Activated CD4-positive, alpha-beta T cell treated with anti-CD3 and anti-CD28 coated beads for 36 hours (primary cell): ENCODE measurements at regions of chr9 and their contacts with region 1.

Region 1: GRCh38 chr9:132800038-132800648 is 77.9 kb downstream of the AK8 start:
- DNase-seq: peak; percentile 77
- ATAC-seq: peak; percentile 87
- H3K4me3 Mint-ChIP-seq: no peak overlapping the region
- H3K27ac Mint-ChIP-seq: no peak overlapping the region
- H3K4me1 Mint-ChIP-seq: no peaks in the 10 kb centered on the region
- H3K27me3 Mint-ChIP-seq: peaks cover 9% of the 10 kb centered on the region

Region 2: DNA sequence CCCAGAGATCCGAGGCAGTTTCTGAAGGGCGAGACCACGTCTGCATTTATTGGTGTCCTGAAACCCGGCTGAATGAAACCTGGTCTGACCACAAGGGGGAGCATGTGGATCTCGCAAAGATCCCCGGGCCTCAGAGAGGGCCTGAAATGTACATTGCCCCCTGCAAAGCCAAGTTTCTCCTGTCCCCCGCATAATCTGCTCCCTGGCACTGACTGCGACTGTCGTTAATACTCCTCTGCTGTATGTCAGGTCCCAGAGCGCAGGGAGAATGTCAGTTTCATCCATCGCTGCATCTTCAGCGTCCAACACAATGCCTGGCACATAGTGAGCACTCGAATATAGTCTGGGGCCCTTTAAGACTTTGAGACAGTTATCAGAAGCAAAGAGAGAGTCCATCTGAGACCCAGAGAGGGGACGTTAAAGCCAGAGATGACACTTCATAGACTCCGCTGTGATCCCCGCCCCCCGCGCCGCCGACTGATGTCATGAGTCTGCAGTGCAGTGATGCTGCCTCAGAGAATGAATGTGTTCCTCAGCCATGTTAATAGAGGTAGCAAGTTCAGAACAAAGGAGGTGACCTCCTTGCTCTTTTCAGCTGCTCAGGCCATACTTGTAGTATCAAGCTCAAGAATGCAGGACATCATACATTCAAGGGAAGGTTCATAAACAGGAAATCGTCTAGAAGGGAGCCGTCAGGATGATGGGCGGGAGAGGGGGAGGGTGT is 292.2 kb before region 1 on chr9:
- CTCF ChIA-PET with region 1: interaction called, 3 read pairs
- POLR2A ChIA-PET with region 1: no interaction called
- intact Hi-C with region 1: loop called (anchors 1 kb)
- DNase-seq: peak; percentile 82
- ATAC-seq: peak; percentile 68
- H3K4me3 Mint-ChIP-seq: no peak overlapping the region
- H3K27ac Mint-ChIP-seq: no peak overlapping the region
- H3K4me1 Mint-ChIP-seq: peaks cover 3% of the 10 kb centered on the region
- H3K27me3 Mint-ChIP-seq: peaks cover 3% of the 10 kb centered on the region

Region 3: GRCh38 chr9:132651254-132651653 is 148.9 kb before region 1 on chr9:
- CTCF ChIA-PET with region 1: no interaction called
- POLR2A ChIA-PET with region 1: no interaction called
- intact Hi-C with region 1: loop called in 1 of 2 experiments (anchors 5 kb)
- DNase-seq: peak; percentile 18
- ATAC-seq: no peak
- H3K4me3 Mint-ChIP-seq: no peak overlapping the region
- H3K27ac Mint-ChIP-seq: no peak overlapping the region
- H3K4me1 Mint-ChIP-seq: peaks cover 10% of the 10 kb centered on the region
- H3K27me3 Mint-ChIP-seq: no peaks in the 10 kb centered on the region

Region 4: DNA sequence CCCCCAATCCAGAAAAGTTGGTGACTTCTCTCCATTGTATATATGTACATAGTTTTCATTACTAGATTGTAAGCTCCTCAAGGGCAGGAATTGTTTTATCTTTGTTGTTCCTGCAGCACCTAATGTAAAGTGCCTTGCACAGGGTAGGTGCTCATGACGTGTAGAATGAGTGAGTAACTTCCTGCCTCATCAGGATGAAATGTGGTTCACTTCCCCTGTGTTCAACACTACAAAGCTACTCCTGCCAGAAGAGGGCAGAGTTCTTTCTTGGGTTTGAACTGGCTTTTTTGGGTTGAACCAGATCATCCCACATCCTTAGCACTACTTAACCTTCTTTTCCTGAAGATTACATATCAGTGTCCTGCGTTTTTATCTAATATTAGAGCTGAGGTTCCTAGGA is 106.0 kb before region 1 on chr9:
- CTCF ChIA-PET with region 1: no interaction called
- POLR2A ChIA-PET with region 1: no interaction called
- intact Hi-C with region 1: loop called in 1 of 2 experiments (anchors 1 kb)
- DNase-seq: peak; percentile 18
- ATAC-seq: peak; percentile 87
- H3K4me3 Mint-ChIP-seq: no peak overlapping the region
- H3K27ac Mint-ChIP-seq: no peak overlapping the region
- H3K4me1 Mint-ChIP-seq: no peaks in the 10 kb centered on the region
- H3K27me3 Mint-ChIP-seq: peaks cover 3% of the 10 kb centered on the region

Region 5: GRCh38 chr9:132768932-132769905 is 30.9 kb before region 1 on chr9:
- CTCF ChIA-PET with region 1: no interaction called
- POLR2A ChIA-PET with region 1: no interaction called
- intact Hi-C with region 1: loop called in 1 of 2 experiments (anchors 1 kb)
- DNase-seq: peak; percentile 82
- ATAC-seq: peak; percentile 75
- H3K4me3 Mint-ChIP-seq: peak overlapping the region; percentile 85
- H3K27ac Mint-ChIP-seq: peak overlapping the region; percentile 94
- H3K4me1 Mint-ChIP-seq: peaks cover 16% of the 10 kb centered on the region
- H3K27me3 Mint-ChIP-seq: no peaks in the 10 kb centered on the region

Region 6: GRCh38 chr9:132973713-132974112 is 173.6 kb after region 1 on chr9:
- CTCF ChIA-PET with region 1: no interaction called
- POLR2A ChIA-PET with region 1: no interaction called
- intact Hi-C with region 1: loop called in 1 of 2 experiments (anchors 5 kb)
- DNase-seq: peak; percentile 51
- ATAC-seq: peak; percentile 64
- H3K4me3 Mint-ChIP-seq: no peak overlapping the region
- H3K27ac Mint-ChIP-seq: no peak overlapping the region
- H3K4me1 Mint-ChIP-seq: peaks cover 4% of the 10 kb centered on the region
- H3K27me3 Mint-ChIP-seq: peaks cover 18% of the 10 kb centered on the region